Testis (tissue), 5 donors: ENCODE measurements at regions of chr9 and their contacts with region 1.

Region 1: DNA sequence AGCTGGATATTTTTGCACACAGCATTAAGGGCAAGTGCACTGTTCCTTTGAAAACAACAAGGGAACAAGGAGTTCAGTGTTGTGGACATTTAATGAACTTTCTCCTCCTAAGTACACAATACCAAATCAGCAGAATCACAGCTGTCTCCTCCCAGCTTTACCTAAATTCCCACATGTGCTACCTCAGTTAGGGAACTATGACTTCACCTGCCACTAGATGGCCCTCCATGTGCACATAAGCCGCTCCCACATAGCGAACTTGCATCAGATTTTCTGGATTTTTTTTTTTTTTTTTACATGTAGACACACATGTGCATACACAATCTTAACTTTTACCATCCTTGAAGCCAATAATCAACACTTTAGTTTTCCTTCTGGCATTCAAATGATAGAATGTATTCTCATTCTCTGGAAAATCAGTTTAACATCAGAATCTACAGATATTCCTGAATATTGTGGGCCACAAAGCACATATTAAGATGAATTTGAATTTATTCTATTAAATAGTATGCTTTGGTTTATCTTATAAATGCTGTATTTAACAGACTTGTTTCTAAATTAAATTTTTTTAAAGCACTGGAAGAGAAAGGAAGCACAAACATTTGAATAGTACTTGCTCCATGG is 123.6 kb downstream of the PALM2AKAP2 start:
- DNase-seq: peak; percentile 76
- H3K4me3 ChIP-seq: no peak overlapping the region
- H3K27ac ChIP-seq: no peak overlapping the region
- H3K4me1 ChIP-seq: no peaks in the 10 kb centered on the region
- H3K27me3 ChIP-seq: no peaks in the 10 kb centered on the region
- CTCF ChIP-seq: peak; percentile 59 to 67 (median 61)
- POLR2A ChIP-seq: no peak

Region 2: GRCh38 chr9:110143950-110144545 is 240.4 kb after region 1 on chr9:
- intact Hi-C with region 1: no loop called
- DNase-seq: no peak
- H3K4me3 ChIP-seq: no peak overlapping the region
- H3K27ac ChIP-seq: no peak overlapping the region
- H3K4me1 ChIP-seq: no peaks in the 10 kb centered on the region
- H3K27me3 ChIP-seq: no peaks in the 10 kb centered on the region
- CTCF ChIP-seq: no peak
- POLR2A ChIP-seq: no peak

Region 3: DNA sequence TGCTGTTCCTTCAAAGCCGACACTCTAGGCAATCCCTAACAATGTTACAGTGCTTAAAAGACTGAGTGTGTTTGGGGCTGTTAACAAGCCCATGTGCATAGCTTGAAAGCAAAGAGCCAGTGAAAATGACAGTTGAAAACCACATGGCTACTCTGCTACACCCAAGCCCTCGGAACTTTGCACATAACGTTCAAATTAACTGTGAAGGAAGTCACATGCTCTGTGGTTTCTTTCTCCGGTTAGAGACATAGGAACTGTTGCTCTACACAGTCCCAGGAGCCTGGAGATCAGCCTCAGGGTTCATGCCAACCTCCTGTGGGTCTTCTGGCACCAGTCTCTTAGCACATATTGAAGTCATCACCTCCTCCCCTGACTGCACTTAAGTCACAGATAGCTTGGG is 253.3 kb after region 1 on chr9:
- intact Hi-C with region 1: loop called (anchors 2 kb)
- DNase-seq: no peak
- H3K4me3 ChIP-seq: no peak overlapping the region
- H3K27ac ChIP-seq: no peak overlapping the region
- H3K4me1 ChIP-seq: no peaks in the 10 kb centered on the region
- H3K27me3 ChIP-seq: no peaks in the 10 kb centered on the region
- CTCF ChIP-seq: no peak
- POLR2A ChIP-seq: no peak

Region 4: GRCh38 chr9:110228960-110229359 is 325.3 kb after region 1 on chr9:
- intact Hi-C with region 1: no loop called
- DNase-seq: no peak
- H3K4me3 ChIP-seq: no peak overlapping the region
- H3K27ac ChIP-seq: no peak overlapping the region
- H3K4me1 ChIP-seq: no peaks in the 10 kb centered on the region
- H3K27me3 ChIP-seq: no peaks in the 10 kb centered on the region
- CTCF ChIP-seq: no peak
- POLR2A ChIP-seq: no peak